ENCODE measurements at regions of chr16 and their contacts with region 1.

Region 1: GRCh38 chr16:82229796-82230619 is 60.0 kb upstream of the MPHOSPH6 start:
- DNase-seq: peak; percentile 60
- H3K4me3 ChIP-seq: no peak overlapping the region
- H3K27ac ChIP-seq: no peak overlapping the region
- H3K4me1 ChIP-seq: no peaks in the 10 kb centered on the region
- CTCF ChIP-seq: peak; percentile 96

Region 2: GRCh38 chr16:81967358-81967757 is 262.6 kb before region 1 on chr16:
- CTCF ChIA-PET with region 1: no interaction called
- POLR2A ChIA-PET with region 1: no interaction called
- intact Hi-C with region 1: loop called (anchors 10 kb)
- DNase-seq: no peak
- H3K4me3 ChIP-seq: no peak overlapping the region
- H3K27ac ChIP-seq: no peak overlapping the region
- H3K4me1 ChIP-seq: no peaks in the 10 kb centered on the region
- CTCF ChIP-seq: no peak

Region 3: GRCh38 chr16:82201931-82202330 is 28.1 kb before region 1 on chr16:
- CTCF ChIA-PET with region 1: no interaction called
- POLR2A ChIA-PET with region 1: no interaction called
- intact Hi-C with region 1: no loop called
- DNase-seq: no peak
- H3K4me3 ChIP-seq: no peak overlapping the region
- H3K27ac ChIP-seq: no peak overlapping the region
- H3K4me1 ChIP-seq: no peaks in the 10 kb centered on the region
- CTCF ChIP-seq: no peak

Region 4: DNA sequence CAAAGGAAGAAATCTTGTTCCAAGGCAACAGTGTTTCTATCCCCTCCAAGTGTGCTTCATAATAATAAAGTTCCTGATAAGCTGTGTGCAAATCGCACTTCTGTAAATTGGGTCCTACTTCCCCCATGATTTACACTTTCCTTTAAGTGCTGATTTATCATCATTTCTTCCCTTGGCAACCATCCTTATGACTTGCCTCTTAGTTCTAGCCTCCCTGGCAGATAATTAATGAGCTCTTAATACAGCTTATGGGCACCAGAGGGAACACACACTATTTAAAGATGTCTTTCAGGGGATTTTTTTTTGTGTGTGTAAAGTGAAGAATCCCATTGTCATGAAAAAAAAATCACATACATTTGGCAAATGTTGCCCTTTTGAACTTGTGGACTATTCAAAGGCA is 41.6 kb after region 1 on chr16:
- CTCF ChIA-PET with region 1: no interaction called
- POLR2A ChIA-PET with region 1: no interaction called
- intact Hi-C with region 1: no loop called
- DNase-seq: no peak
- H3K4me3 ChIP-seq: no peak overlapping the region
- H3K27ac ChIP-seq: no peak overlapping the region
- H3K4me1 ChIP-seq: no peaks in the 10 kb centered on the region
- CTCF ChIP-seq: no peak